B cell (primary cell): ENCODE measurements at regions of chr1 and their contacts with region 1.

Region 1: DNA sequence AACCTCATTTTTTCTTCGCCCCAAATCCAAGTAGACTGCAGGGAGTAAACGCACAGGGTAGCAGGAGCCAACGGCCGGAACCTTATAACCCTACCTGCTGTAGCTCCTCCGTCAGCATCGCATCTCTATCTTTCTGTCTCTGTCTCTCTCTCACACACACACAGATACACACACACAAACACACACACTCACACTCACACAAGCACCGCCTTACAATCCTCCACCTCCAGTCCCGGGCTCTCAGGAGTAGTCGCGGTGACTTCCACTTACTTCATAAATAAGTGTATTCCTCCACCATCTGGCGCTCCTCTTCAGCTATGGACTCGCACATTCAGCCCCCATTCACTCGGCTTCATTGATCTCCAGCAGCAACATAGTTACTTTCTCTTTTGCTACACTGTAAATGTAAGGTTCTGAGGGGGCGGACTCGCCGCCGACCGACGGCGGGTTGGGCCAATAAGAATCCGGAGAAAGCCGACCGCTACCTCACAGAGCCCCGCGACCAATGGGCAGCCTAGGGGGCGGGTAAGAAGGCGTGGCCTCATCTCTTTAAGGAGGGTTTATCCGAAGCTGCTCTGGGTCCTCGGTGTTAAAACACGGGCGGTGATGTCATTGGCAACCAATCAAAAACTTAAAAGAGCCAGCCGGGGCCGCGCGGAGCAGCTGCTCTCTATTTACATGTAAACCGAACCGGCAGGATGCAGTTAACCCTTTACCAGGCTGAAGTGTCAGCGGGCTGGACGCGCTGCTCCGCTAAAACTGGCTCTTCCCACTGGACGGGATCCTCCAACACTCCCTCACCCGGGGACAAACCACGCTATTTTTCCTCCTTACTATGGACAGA is at the start of gene DUSP10:
- DNase-seq: peak; percentile 100
- ATAC-seq: peak; percentile 78
- H3K4me3 ChIP-seq: peak within 1 kb of the TSS; percentile 85 to 94 (median 94)
- H3K4me3 Mint-ChIP-seq: no peak within 1 kb of the TSS
- H3K27ac ChIP-seq: peak within 1 kb of the TSS; percentile 99
- H3K27ac Mint-ChIP-seq: no peak within 1 kb of the TSS
- H3K4me1 ChIP-seq: peaks cover 28 to 42% of the 10 kb centered on the region in 2 donors
- H3K4me1 Mint-ChIP-seq: peaks cover 26% of the 10 kb centered on the region
- H3K27me3 ChIP-seq: no peaks in the 10 kb centered on the region
- H3K27me3 Mint-ChIP-seq: no peaks in the 10 kb centered on the region
- CTCF ChIP-seq: no peak
- total RNA-seq, gene DUSP10: 19.8 and 22.8 TPM in 2 replicates

Region 2: GRCh38 chr1:220527908-220528678 is 1213.8 kb before region 1 on chr1 and contains the start of gene MARK1:
- CTCF ChIA-PET with region 1: no interaction called
- POLR2A ChIA-PET with region 1: no interaction called
- intact Hi-C with region 1: no loop called
- DNase-seq: peak; percentile 55
- ATAC-seq: peak; percentile 64
- H3K4me3 ChIP-seq: peak within 1 kb of the TSS in 4 of 5 experiments; percentile 39 to 70 (median 56)
- H3K4me3 Mint-ChIP-seq: peak within 1 kb of the TSS; percentile 90
- H3K27ac ChIP-seq: peak within 1 kb of the TSS in 1 of 2 donors; percentile 48
- H3K27ac Mint-ChIP-seq: peak within 1 kb of the TSS; percentile 77
- H3K4me1 ChIP-seq: peaks cover 17 to 21% of the 10 kb centered on the region in 2 donors
- H3K4me1 Mint-ChIP-seq: peaks cover 23% of the 10 kb centered on the region
- H3K27me3 ChIP-seq: peaks cover 0 to 53% (median 28%) of the 10 kb centered on the region in 4 experiments
- H3K27me3 Mint-ChIP-seq: peaks cover 46% of the 10 kb centered on the region
- CTCF ChIP-seq: no peak
- total RNA-seq, gene MARK1: 3.8 and 3.9 TPM in 2 replicates

Region 3: DNA sequence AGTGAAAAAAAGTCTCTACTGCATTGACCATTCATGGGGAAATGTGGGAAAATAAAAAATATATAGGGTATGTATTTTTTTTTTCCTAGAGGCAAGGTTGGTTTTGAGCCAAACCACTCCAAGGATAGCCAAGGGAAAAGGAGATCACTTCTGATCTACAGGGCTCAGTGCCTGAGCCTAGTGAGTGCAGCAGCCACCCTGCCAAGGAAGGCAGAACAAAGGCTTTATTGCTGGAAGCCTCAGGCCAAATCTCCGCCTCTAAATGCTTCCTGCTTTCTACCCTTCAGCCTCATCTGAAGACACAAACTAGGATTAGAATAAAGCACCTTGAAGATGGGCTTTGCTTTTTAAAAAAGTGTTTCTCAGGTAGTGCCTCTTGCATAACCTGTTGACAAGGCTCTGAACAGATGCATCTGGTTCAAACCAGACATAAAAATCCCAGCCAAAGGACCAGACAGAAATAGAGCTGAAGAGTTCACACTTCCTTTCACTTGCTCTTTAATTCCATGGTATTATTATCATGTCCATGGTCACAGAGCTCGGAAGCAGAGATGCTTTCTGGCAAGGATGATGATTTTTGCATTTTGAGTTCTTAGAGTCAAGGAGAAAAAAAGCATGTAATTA is 1041.3 kb before region 1 on chr1:
- CTCF ChIA-PET with region 1: no interaction called
- POLR2A ChIA-PET with region 1: no interaction called
- intact Hi-C with region 1: no loop called
- DNase-seq: no peak
- ATAC-seq: no peak
- H3K4me3 ChIP-seq: no peak overlapping the region
- H3K4me3 Mint-ChIP-seq: no peak overlapping the region
- H3K27ac ChIP-seq: no peak overlapping the region
- H3K27ac Mint-ChIP-seq: no peak overlapping the region
- H3K4me1 ChIP-seq: peaks cover 0 to 4% of the 10 kb centered on the region in 2 donors
- H3K4me1 Mint-ChIP-seq: peaks cover 6% of the 10 kb centered on the region
- H3K27me3 ChIP-seq: no peaks in the 10 kb centered on the region
- H3K27me3 Mint-ChIP-seq: no peaks in the 10 kb centered on the region
- CTCF ChIP-seq: no peak

Region 4: DNA sequence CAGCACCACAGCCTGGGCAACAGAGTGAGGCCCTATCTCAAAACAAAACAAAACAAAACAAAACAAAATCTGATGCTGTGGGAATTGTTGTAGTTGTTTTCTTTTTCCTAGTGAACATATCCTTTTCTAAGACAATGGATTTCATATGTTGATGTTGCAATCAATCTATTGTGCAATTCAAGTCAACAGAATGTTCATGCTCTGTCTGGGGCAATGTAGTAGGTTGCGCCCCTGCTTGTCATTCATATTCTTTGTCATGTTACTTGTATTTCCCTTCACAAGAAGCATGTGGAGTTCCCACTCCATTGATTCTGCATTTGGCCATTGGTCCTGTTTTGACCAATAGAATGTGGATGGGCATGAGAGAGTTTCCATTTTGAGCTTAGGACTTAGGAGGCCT is 224.0 kb before region 1 on chr1:
- CTCF ChIA-PET with region 1: interaction called, 3 read pairs
- POLR2A ChIA-PET with region 1: interaction called, 12 read pairs
- intact Hi-C with region 1: no loop called
- DNase-seq: no peak
- ATAC-seq: no peak
- H3K4me3 ChIP-seq: no peak overlapping the region
- H3K4me3 Mint-ChIP-seq: no peak overlapping the region
- H3K27ac ChIP-seq: no peak overlapping the region
- H3K27ac Mint-ChIP-seq: no peak overlapping the region
- H3K4me1 ChIP-seq: no peaks in the 10 kb centered on the region
- H3K4me1 Mint-ChIP-seq: no peaks in the 10 kb centered on the region
- H3K27me3 ChIP-seq: no peaks in the 10 kb centered on the region
- H3K27me3 Mint-ChIP-seq: no peaks in the 10 kb centered on the region
- CTCF ChIP-seq: no peak

Region 5: GRCh38 chr1:221753828-221754188 is 11.9 kb after region 1 on chr1:
- CTCF ChIA-PET with region 1: interaction called, 11 read pairs
- POLR2A ChIA-PET with region 1: interaction called, 6 read pairs
- intact Hi-C with region 1: loop called (anchors 1 kb)
- DNase-seq: no peak
- ATAC-seq: no peak
- H3K4me3 ChIP-seq: peak overlapping the region in 1 of 5 experiments; percentile 43
- H3K4me3 Mint-ChIP-seq: peak overlapping the region; percentile 82
- H3K27ac ChIP-seq: no peak overlapping the region
- H3K27ac Mint-ChIP-seq: peak overlapping the region; percentile 85
- H3K4me1 ChIP-seq: peaks cover 15 to 22% of the 10 kb centered on the region in 2 donors
- H3K4me1 Mint-ChIP-seq: peaks cover 36% of the 10 kb centered on the region
- H3K27me3 ChIP-seq: no peaks in the 10 kb centered on the region
- H3K27me3 Mint-ChIP-seq: no peaks in the 10 kb centered on the region
- CTCF ChIP-seq: no peak

Region 6: GRCh38 chr1:221794079-221794670 is 52.2 kb after region 1 on chr1:
- CTCF ChIA-PET with region 1: interaction called, 9 read pairs
- POLR2A ChIA-PET with region 1: interaction called, 12 read pairs
- intact Hi-C with region 1: loop called (anchors 1 kb)
- DNase-seq: peak; percentile 92
- ATAC-seq: peak; percentile 71
- H3K4me3 ChIP-seq: peak overlapping the region in 2 of 5 experiments; percentile 2 to 44
- H3K4me3 Mint-ChIP-seq: peak overlapping the region; percentile 69
- H3K27ac ChIP-seq: peak overlapping the region; percentile 87 to 99
- H3K27ac Mint-ChIP-seq: peak overlapping the region; percentile 92
- H3K4me1 ChIP-seq: peaks cover 36 to 37% of the 10 kb centered on the region in 2 donors
- H3K4me1 Mint-ChIP-seq: peaks cover 45% of the 10 kb centered on the region
- H3K27me3 ChIP-seq: no peaks in the 10 kb centered on the region
- H3K27me3 Mint-ChIP-seq: no peaks in the 10 kb centered on the region
- CTCF ChIP-seq: no peak

Region 7: DNA sequence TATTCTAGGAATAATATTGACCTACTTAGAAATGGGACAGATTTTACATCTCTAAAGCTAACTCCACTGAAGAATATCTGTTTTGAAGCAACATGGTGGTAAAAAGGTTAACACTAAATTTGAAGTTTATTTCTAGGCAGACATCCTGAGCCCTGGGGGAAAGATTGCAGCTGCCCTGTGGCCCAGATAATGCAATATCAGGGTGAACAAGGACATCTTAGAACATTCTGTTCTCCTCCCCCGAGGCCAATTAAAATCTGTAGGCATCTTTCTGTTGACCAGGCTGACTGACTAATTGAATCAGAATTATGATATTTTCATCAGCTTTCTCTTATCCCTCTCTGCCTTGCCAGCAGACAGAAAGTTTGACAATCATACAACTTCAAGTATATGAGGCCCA is 149.8 kb after region 1 on chr1:
- CTCF ChIA-PET with region 1: interaction called, 14 read pairs
- POLR2A ChIA-PET with region 1: no interaction called
- intact Hi-C with region 1: no loop called
- DNase-seq: no peak
- ATAC-seq: no peak
- H3K4me3 ChIP-seq: no peak overlapping the region
- H3K4me3 Mint-ChIP-seq: no peak overlapping the region
- H3K27ac ChIP-seq: no peak overlapping the region
- H3K27ac Mint-ChIP-seq: no peak overlapping the region
- H3K4me1 ChIP-seq: peaks cover 9% of the 10 kb centered on the region in 2 donors
- H3K4me1 Mint-ChIP-seq: peaks cover 16% of the 10 kb centered on the region
- H3K27me3 ChIP-seq: no peaks in the 10 kb centered on the region
- H3K27me3 Mint-ChIP-seq: peaks cover 4% of the 10 kb centered on the region
- CTCF ChIP-seq: no peak

Region 8: GRCh38 chr1:222009105-222009730 is 267.3 kb after region 1 on chr1:
- CTCF ChIA-PET with region 1: interaction called, 9 read pairs
- POLR2A ChIA-PET with region 1: no interaction called
- intact Hi-C with region 1: loop called (anchors 1 kb)
- DNase-seq: peak; percentile 67
- ATAC-seq: peak; percentile 54
- H3K4me3 ChIP-seq: peak overlapping the region in 2 of 5 experiments; percentile 5 to 13
- H3K4me3 Mint-ChIP-seq: no peak overlapping the region
- H3K27ac ChIP-seq: no peak overlapping the region
- H3K27ac Mint-ChIP-seq: no peak overlapping the region
- H3K4me1 ChIP-seq: peaks cover 0 to 4% of the 10 kb centered on the region in 2 donors
- H3K4me1 Mint-ChIP-seq: no peaks in the 10 kb centered on the region
- H3K27me3 ChIP-seq: no peaks in the 10 kb centered on the region
- H3K27me3 Mint-ChIP-seq: no peaks in the 10 kb centered on the region
- CTCF ChIP-seq: peak; percentile 70